Mammary epithelial cell (primary cell): ENCODE measurements at regions of chr9 and their contacts with region 1.

Region 1: GRCh38 chr9:33737811-33738606 is 57.4 kb upstream of the PRSS3 start:
- DNase-seq: peak; percentile 60
- H3K4me3 ChIP-seq: no peak overlapping the region
- H3K27ac ChIP-seq: no peak overlapping the region
- H3K4me1 ChIP-seq: peaks cover 10% of the 10 kb centered on the region
- H3K27me3 ChIP-seq: no peaks in the 10 kb centered on the region
- CTCF ChIP-seq: peak; percentile 74 to 89

Region 2: DNA sequence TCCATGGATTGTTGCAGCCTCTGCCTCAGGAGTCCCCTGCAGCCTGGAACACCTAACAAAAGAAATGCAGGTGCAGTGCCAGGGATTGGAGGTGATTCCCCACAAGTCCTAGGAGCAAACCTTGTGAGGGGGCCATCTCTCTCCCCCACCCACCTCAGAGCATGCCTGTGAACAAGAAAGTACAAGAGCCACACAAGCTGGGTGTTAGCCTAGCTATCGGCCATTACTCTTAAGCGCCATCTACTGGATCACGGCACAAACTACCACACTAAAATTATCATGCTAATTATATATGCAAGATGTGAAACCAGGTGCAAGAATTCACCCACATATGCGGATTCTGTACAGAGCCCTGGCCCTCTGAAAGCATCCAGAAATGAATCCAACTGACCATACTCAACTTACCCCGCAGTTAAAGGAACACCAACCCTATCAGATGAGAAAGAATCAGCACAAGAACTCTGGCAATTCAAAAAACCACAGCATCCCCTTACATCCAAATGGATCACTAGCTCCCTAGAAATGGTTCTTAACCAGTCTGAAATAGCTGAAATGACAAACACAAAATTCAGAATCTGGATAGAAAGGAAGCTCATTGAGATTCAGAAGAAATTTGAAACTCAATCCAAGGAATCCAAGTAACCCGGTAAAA is 40.8 kb after region 1 on chr9:
- CTCF ChIA-PET with region 1: interaction called, 22 read pairs
- dilution Hi-C with region 1: no loop called
- in situ Hi-C with region 1: loop called in 1 of 2 experiments (anchors 5 kb)
- intact Hi-C with region 1: loop called (anchors 1 kb)
- DNase-seq: peak; percentile 55
- H3K4me3 ChIP-seq: no peak overlapping the region
- H3K27ac ChIP-seq: no peak overlapping the region
- H3K4me1 ChIP-seq: peaks cover 30% of the 10 kb centered on the region
- H3K27me3 ChIP-seq: no peaks in the 10 kb centered on the region
- CTCF ChIP-seq: peak; percentile 67 to 85